CD8-positive, alpha-beta memory T cell (primary cell): ENCODE measurements at regions of chr19 and their contacts with region 1.

Region 1: DNA sequence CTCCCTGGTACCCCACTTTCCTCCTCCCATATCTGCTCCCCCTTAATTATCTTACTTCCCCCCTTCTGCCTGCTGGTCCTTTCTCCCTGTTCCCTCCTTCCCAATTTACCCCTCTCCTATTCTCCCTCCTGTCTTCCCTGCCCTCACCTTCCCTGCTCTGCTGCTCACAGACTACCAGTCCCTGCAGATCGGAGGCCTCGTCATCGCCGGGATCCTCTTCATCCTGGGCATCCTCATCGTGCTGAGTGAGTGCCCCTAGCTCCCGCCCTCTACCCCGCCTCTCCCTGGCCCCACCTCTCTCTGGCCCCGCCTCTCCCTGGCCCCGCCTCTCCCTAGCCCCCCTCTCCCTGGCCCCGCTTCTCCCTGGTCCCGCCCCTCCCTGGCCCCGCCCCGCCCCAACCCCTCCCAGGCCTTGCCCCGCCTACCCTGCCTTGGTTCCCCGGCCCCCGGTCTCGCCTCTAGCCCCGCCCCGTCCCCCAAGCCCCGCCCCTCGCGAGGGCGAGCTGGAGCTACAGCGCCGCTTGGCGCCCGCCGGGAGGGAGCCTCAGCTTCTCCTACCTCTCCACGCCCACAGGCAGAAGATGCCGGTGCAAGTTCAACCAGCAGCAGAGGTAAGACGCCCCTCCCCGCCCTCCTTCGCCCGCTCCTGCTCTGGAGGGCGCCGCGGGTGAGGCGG is 2.0 kb upstream of the FXYD7 start:
- DNase-seq: peak; percentile 90 to 95 (median 93)
- H3K4me3 ChIP-seq: peak overlapping the region; percentile 68
- H3K4me3 Mint-ChIP-seq: peak overlapping the region; percentile 70 to 90 (median 83)
- H3K27ac ChIP-seq: no peak overlapping the region
- H3K27ac Mint-ChIP-seq: peak overlapping the region in 6 of 8 donors; percentile 53 to 89 (median 86)
- H3K4me1 ChIP-seq: peaks cover 40% of the 10 kb centered on the region
- H3K4me1 Mint-ChIP-seq: peaks cover 37 to 54% (median 40%) of the 10 kb centered on the region in 3 donors
- H3K27me3 ChIP-seq: no peaks in the 10 kb centered on the region
- H3K27me3 Mint-ChIP-seq: peaks cover 7 to 10% of the 10 kb centered on the region in 2 donors

Region 2: DNA sequence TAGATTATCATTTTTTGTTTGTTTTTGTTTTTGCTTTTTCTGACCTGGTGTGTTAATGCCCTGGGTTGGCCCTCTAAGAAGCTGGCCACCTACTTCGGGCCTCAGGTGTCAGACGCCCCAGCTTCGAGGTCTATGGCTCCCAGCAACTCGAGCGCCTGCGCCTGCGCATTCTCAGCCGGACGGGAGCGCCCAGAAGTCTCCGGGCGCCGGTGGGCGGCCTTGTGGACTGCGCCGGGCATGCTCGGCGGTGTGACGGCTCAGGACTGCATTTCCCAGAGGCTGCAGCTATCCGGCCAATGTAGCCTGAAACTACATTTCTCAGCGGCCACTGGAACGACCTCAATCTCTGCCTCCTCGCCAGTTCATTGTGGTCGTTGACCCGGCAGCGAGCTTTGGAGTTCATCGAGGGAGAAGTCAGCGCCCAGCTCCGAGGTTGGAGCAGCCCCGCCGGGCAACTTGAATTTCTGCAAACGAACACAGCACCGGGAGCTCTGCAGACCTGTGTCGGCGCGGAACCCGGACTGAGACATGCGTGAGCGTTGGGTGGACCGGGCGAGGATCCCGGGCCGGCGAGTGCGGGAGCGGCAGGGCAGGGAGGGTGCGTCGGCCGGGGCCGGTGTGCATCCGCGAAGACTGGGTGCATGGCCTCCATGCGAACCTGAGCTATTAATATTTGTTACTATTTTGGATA is 214.3 kb before region 1 on chr19 and contains the start of gene ZNF30:
- CTCF ChIA-PET with region 1: no interaction called
- POLR2A ChIA-PET with region 1: no interaction called
- DNase-seq: peak; percentile 55 to 83 (median 70)
- H3K4me3 ChIP-seq: peak within 1 kb of the TSS; percentile 79
- H3K4me3 Mint-ChIP-seq: peak within 1 kb of the TSS; percentile 89 to 96 (median 91)
- H3K27ac ChIP-seq: peak within 1 kb of the TSS; percentile 60
- H3K27ac Mint-ChIP-seq: peak within 1 kb of the TSS; percentile 7 to 89 (median 64)
- H3K4me1 ChIP-seq: peaks cover 7% of the 10 kb centered on the region
- H3K4me1 Mint-ChIP-seq: peaks cover 13 to 33% (median 30%) of the 10 kb centered on the region in 3 donors
- H3K27me3 ChIP-seq: no peaks in the 10 kb centered on the region
- H3K27me3 Mint-ChIP-seq: peaks cover 2 to 6% of the 10 kb centered on the region in 2 donors
- total RNA-seq, gene ZNF30: 6.4 to 7.4 TPM

Region 3: GRCh38 chr19:35154525-35155406 is 13.7 kb after region 1 on chr19 and contains the start of gene FXYD5:
- CTCF ChIA-PET with region 1: interaction called, 29 read pairs
- POLR2A ChIA-PET with region 1: interaction called, 34 read pairs
- DNase-seq: peak; percentile 58 to 77 (median 62)
- H3K4me3 ChIP-seq: peak within 1 kb of the TSS; percentile 92
- H3K4me3 Mint-ChIP-seq: peak within 1 kb of the TSS; percentile 96 to 100 (median 99)
- H3K27ac ChIP-seq: peak within 1 kb of the TSS; percentile 91
- H3K27ac Mint-ChIP-seq: peak within 1 kb of the TSS; percentile 91 to 100 (median 98)
- H3K4me1 ChIP-seq: peaks cover 37% of the 10 kb centered on the region
- H3K4me1 Mint-ChIP-seq: peaks cover 49 to 52% (median 49%) of the 10 kb centered on the region in 3 donors
- H3K27me3 ChIP-seq: no peaks in the 10 kb centered on the region
- H3K27me3 Mint-ChIP-seq: no peaks in the 10 kb centered on the region
- total RNA-seq, gene FXYD5: 295 TPM

Region 4: DNA sequence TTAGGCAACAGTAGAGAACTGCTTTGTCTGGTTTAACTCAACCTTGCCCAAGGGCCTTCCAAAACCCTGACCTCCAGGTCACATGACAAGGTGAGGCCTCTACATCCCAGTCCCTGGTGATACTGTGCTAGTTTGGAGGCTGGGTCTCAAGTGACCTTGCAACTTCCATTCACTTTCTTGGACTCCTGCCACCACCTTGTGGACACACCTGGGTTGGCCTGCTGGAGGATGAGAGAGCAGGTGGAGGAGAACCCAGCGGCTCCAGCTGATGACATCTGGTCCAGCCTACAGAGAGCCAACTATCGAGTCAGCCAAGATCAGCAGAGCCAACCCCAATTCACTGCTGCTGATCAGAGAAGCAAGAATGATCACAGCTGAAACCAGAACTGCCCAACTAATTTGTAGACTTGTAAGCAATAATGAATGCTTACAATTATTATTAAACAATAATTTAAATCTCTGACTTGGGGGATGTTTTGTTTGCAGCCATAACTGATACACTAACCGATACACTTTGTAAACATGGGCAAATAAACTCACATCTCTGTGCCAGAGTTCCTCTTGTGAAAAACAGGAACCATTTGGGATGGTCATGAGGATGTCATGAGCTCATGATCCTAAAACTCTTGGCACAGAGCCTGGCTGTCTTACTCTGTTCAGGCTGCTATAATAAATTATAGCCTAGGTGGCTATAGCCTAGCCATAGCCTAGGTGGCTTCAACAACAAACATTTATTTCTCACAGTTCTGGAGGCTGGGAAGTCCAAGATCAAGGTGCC is 76.0 kb after region 1 on chr19:
- CTCF ChIA-PET with region 1: interaction called, 14 read pairs
- POLR2A ChIA-PET with region 1: interaction called, 3 read pairs
- DNase-seq: peak in 4 of 5 donors; percentile 17 to 65 (median 38)
- H3K4me3 ChIP-seq: no peak overlapping the region
- H3K4me3 Mint-ChIP-seq: no peak overlapping the region
- H3K27ac ChIP-seq: no peak overlapping the region
- H3K27ac Mint-ChIP-seq: peak overlapping the region; percentile 52 to 100 (median 86)
- H3K4me1 ChIP-seq: peaks cover 57% of the 10 kb centered on the region
- H3K4me1 Mint-ChIP-seq: peaks cover 43 to 59% (median 56%) of the 10 kb centered on the region in 3 donors
- H3K27me3 ChIP-seq: no peaks in the 10 kb centered on the region
- H3K27me3 Mint-ChIP-seq: peaks cover 0 to 4% of the 10 kb centered on the region in 2 donors